Lower leg skin (tissue), 4 donors: ENCODE measurements at regions of chr16 and their contacts with region 1.

Region 1: DNA sequence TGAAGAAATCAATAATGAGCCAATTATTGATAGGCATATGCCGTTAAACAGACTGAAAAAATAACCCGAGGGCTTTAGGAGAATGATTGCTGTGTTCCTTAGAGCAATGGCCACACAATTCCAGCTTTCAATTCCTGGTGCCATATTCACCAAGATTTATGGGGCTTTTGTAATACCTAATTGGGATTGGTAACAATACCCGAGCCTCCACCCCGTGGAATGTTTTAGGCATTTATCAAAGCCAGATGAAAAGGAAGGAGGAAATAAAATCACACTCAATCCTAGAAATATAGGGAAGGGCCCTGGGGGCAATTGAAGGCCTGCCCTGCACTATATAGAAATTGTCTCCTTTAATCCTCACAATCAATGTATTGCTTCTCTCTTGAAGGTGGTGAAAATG is 42.1 kb upstream of the MLYCD start:
- DNase-seq: no peak
- H3K4me3 ChIP-seq: no peak overlapping the region
- CTCF ChIP-seq: no peak
- POLR2A ChIP-seq: no peak

Region 2: DNA sequence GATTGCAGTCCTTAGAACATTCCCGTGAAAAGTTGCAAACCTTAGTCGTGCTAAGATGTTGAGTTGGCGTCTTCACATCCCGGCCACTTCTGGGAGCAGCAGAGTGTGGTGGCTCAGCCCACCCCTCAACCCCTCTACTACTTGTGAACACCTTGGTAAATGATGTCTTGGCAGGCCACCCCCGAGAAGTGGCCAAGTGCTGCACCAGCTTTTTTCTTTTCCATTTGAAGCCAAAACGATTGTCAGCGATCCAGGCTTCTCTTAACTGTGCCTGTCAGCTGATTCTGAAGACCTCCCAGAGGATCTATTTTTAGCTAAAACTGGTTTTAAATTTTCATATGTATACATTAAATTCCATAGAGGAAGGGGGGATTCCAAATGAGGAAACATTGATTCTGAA is 982.5 kb before region 1 on chr16:
- intact Hi-C with region 1: loop called (anchors 5 kb)
- DNase-seq: no peak
- H3K4me3 ChIP-seq: no peak overlapping the region
- CTCF ChIP-seq: no peak
- POLR2A ChIP-seq: no peak

Region 3: DNA sequence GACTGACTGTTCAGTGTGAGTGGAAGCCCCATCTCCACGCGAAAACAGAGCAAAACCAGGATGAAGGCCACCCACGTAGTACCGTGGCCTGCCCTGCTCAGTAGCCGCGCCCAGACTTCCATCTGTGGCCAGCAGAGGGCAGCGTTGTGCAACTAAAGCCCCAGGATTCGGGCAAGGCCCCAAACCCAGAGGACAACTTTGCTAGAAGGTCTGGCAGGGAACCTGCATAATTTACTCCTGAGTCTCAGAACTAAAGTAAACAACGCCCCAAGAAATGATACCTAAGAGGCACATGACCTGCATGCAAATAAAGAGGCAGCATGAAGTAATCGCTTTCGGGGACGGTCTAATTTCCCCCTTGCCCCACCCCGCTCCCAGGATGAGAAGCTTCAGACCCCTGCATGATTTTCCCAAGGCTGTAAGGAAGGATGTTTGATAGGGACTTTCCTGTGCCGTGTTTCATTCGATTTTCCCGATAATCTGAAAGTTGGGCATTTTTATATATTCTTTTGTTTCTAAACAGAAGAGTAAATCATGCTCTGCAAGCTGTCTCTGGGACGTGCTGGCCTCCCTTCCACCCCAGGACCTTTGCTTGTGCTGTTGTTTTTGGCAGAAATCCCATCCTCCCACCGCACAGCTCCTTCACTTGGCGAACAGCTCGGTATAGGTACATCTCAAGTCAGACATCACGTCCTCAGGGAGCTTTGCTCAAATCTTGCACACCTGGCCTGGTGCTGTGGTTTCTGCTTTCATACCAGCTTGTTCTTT is 30.5 kb before region 1 on chr16:
- intact Hi-C with region 1: no loop called
- DNase-seq: peak; percentile 87 to 97
- H3K4me3 ChIP-seq: no peak overlapping the region
- CTCF ChIP-seq: peak in 1 of 3 donors; percentile 69
- POLR2A ChIP-seq: no peak

Region 4: DNA sequence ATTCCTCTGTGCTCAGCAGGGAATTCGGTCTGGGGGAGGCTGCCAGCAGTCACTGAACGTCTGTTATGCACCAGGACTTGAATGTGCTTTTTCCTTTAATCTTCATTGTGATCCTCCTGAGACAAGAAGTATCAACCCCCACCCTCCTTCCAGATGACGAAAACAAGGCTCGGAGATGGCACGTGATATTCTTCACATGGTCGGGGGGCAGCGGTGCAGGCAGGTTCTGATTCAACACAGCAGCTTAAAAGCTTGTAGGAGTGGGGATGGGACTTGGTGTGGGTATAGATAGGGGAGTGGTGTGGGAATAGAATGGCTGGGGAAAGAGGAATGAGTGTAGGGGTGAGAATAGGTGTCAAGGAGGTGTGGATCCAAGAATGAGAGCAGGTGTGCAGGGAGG is 117.7 kb after region 1 on chr16:
- intact Hi-C with region 1: no loop called
- DNase-seq: no peak
- H3K4me3 ChIP-seq: no peak overlapping the region
- CTCF ChIP-seq: no peak
- POLR2A ChIP-seq: no peak